Mammary epithelial cell (primary cell): ENCODE measurements at regions of chr12 and their contacts with region 1.

Region 1: GRCh38 chr12:118212606-118213005 is 76.7 kb downstream of the PEBP1 start:
- DNase-seq: no peak
- H3K4me3 ChIP-seq: no peak overlapping the region
- H3K27ac ChIP-seq: no peak overlapping the region
- H3K4me1 ChIP-seq: no peaks in the 10 kb centered on the region
- H3K27me3 ChIP-seq: no peaks in the 10 kb centered on the region
- CTCF ChIP-seq: no peak

Region 2: DNA sequence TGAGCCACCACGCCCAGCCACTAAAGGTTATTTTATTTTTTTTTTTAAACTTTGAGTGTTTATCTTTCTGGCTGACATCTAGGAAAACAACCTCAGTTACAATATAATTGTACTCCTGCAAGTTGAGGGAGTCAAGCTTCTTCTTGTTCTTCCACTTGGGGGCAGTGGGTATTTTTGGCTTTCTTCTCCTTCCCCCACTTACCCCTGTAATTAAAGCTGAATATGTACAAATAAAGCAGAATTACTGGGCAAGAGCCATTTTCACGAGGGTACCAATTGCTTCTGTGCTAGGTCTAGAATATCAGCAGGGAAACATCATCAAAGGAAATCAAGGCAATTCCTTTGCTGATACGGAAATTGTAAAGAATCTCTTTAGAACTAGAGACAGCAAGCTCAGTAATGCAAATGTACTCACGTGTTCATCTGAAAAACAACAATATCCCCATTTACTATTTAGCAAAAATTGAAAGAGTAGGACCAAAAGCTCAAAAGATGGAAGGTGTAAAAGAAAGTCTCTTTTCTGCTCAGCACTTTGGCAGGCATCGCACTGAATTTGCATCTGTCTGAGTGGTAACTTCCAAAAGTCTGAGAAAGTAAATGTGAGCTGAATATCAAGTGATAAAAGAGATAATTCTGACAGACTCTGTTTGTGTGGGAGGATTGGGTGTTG is 87.3 kb after region 1 on chr12:
- CTCF ChIA-PET with region 1: no interaction called
- dilution Hi-C with region 1: loop called (anchors 5 kb)
- in situ Hi-C with region 1: no loop called
- intact Hi-C with region 1: no loop called
- DNase-seq: no peak
- H3K4me3 ChIP-seq: no peak overlapping the region
- H3K27ac ChIP-seq: no peak overlapping the region
- H3K4me1 ChIP-seq: peaks cover 16% of the 10 kb centered on the region
- H3K27me3 ChIP-seq: no peaks in the 10 kb centered on the region
- CTCF ChIP-seq: no peak